ENCODE measurements at regions of chr16 and their contacts with region 1.

Region 1: DNA sequence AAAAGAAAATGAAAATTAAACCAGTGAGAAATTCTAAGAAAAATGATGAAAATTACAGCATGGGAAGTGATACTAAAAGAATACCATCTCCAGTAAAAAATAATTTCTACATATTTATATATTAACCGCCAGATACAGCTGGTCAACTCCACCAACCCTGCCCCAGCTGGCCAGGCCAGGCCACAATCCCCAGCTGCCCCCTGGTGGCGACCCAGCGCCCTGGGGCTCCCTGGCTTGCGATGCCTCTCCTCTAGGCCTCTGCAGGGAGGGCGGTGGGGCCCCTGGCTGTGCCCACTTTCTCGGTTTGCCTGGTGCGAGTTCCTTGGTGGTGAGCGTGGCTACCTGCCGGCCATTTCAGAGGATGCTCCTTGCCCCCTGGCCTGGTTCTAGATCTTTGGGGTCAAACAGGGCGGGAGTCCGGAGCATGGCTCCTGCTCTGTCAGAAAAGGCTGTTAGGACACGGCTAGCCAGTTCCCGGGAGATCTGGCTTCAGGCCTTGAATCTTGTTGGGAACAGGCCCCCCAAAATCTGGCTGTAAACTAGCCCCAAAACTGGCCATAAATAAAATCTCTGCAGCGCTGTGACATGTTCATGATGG is 14.5 kb downstream of the GLIS2 start:
- DNase-seq: peak; percentile 79 to 87 (median 86)
- ATAC-seq: peak; percentile 77
- H3K4me3 ChIP-seq: no peak overlapping the region
- H3K27ac ChIP-seq: no peak overlapping the region
- H3K4me1 ChIP-seq: peaks cover 26% of the 10 kb centered on the region
- H3K27me3 ChIP-seq: no peaks in the 10 kb centered on the region
- CTCF ChIP-seq: peak; percentile 92 to 97 (median 95)
- POLR2A ChIP-seq: no peak

Region 2: GRCh38 chr16:4208341-4208751 is 122.0 kb before region 1 on chr16:
- intact Hi-C with region 1: loop called (anchors 5 kb)
- DNase-seq: no peak
- ATAC-seq: no peak
- H3K4me3 ChIP-seq: no peak overlapping the region
- H3K27ac ChIP-seq: no peak overlapping the region
- H3K4me1 ChIP-seq: no peaks in the 10 kb centered on the region
- H3K27me3 ChIP-seq: no peaks in the 10 kb centered on the region
- CTCF ChIP-seq: no peak
- POLR2A ChIP-seq: no peak

Region 3: GRCh38 chr16:4293822-4294457 is 36.4 kb before region 1 on chr16:
- intact Hi-C with region 1: loop called (anchors 5 kb)
- DNase-seq: peak in 3 of 4 donors; percentile 52 to 66 (median 59)
- ATAC-seq: peak; percentile 72
- H3K4me3 ChIP-seq: no peak overlapping the region
- H3K27ac ChIP-seq: peak overlapping the region in 2 of 4 donors; percentile 39 to 60
- H3K4me1 ChIP-seq: peaks cover 10% of the 10 kb centered on the region
- H3K27me3 ChIP-seq: no peaks in the 10 kb centered on the region
- CTCF ChIP-seq: no peak
- POLR2A ChIP-seq: no peak

Region 4: GRCh38 chr16:4805231-4805630 is 474.9 kb after region 1 on chr16:
- intact Hi-C with region 1: no loop called
- DNase-seq: no peak
- ATAC-seq: no peak
- H3K4me3 ChIP-seq: no peak overlapping the region
- H3K27ac ChIP-seq: no peak overlapping the region
- H3K4me1 ChIP-seq: peaks cover 25% of the 10 kb centered on the region
- H3K27me3 ChIP-seq: no peaks in the 10 kb centered on the region
- CTCF ChIP-seq: no peak
- POLR2A ChIP-seq: no peak